ENCODE measurements at regions of chr11 and their contacts with region 1.

Region 1: DNA sequence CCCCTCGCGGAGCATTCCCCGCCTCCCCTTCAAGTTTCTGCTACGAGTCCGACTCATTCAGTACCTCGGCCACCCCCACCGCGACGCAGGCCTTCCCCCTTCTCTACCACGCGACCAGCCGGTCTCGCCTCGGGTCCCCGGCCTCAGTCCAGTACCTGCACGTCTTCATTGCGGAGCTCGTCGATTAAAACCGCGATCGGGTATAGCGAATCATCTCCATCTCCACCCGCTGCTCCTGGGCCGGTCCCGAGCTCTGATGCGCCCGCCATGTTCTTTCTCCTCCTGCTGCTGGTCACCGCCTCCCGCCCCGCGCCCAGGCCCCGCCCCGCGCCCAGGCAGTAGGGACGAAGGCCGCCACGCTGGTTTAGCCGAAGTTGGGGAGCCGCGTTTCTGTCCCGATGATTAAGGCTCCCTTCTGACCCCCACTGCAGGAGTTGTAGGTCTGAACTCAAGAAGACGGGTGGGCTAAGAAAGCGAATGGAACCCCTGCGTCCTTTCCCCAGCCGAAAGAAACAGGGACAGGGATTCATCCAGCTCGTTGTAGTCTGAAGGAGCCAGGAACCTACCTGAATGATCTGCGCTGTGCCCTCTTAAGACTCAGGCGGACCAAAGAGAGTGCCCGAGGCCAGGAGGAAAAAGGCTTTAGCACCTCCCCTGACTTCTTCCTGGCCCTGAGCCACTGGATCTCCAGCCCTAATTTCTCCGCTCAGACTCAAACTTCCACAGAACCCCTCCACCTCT is at the start of gene PPP2R1B:
- DNase-seq: peak; percentile 74
- H3K4me3 ChIP-seq: peak within 1 kb of the TSS; percentile 88
- H3K27ac ChIP-seq: peak within 1 kb of the TSS; percentile 35
- H3K4me1 ChIP-seq: peaks cover 17% of the 10 kb centered on the region
- CTCF ChIP-seq: no peak
- total RNA-seq, gene PPP2R1B: 30.2 and 50.6 TPM in 2 replicates

Region 2: DNA sequence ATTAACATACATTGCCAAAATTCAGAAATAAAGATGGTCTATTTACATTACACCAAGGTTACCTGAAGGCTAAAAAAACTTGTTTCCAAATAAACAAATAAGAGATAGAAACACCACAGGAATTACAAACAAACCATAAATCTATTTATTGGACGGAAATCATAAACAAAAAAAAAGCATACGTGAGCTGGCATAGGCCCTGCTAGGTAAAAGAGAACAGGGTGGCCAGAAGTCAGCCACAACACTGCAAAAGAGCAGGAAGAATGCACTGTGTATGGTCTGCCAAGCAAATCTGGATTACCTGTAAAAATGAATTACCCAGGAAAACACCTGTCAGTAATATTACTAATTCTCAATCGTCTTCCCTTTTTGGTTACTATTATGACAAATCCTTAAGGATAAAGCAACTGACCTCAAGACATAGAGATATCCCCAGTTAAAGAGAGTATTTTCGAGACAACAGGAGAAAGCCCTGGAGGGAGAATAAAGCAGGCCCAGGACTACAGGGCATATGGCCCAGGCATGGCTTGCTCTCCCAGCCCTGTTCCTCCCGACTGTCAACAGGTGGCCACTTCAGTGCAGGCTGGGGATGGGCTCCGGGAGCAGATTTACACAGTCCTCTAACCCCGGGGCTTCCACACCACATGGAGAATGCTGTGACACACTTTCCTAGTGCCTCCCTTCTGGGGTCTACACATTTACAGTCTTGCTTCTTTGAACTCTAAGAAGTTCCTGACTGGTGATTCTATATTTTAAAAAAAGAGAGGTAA is 18.0 kb before region 1 on chr11:
- CTCF ChIA-PET with region 1: no interaction called
- POLR2A ChIA-PET with region 1: interaction called, 15 read pairs
- intact Hi-C with region 1: no loop called
- DNase-seq: no peak
- H3K4me3 ChIP-seq: no peak overlapping the region
- H3K27ac ChIP-seq: no peak overlapping the region
- H3K4me1 ChIP-seq: no peaks in the 10 kb centered on the region
- CTCF ChIP-seq: no peak